Activated T-helper 1 cell treated with anti-CD3 and anti-CD28 coated beads, Interleukin-12 subunit alpha, Interleukin-12 subunit beta, Interleukin-2, Interleukin-4 antibody, amounts not matched to agents 30 ng/mL and 10 ng/mL and 1 ng/mL, durations not matched to agents 14 hours and 24 hours and 36 hours (primary cell): ENCODE measurements at regions of chr7 and their contacts with region 1.

Region 1: GRCh38 chr7:92447345-92448204 is at the start of gene GATAD1:
- DNase-seq: peak; percentile 79
- H3K4me3 Mint-ChIP-seq: peak within 1 kb of the TSS; percentile 89
- H3K27ac Mint-ChIP-seq: peak within 1 kb of the TSS; percentile 92
- H3K4me1 Mint-ChIP-seq: peaks cover 15% of the 10 kb centered on the region
- H3K27me3 Mint-ChIP-seq: no peaks in the 10 kb centered on the region
- total RNA-seq, gene GATAD1: 18.4 and 18.8 TPM in 2 replicates

Region 2: GRCh38 chr7:91089382-91089963 is 1358.1 kb before region 1 on chr7:
- intact Hi-C with region 1: loop called (anchors 10 kb)
- DNase-seq: no peak
- H3K4me3 Mint-ChIP-seq: no peak overlapping the region
- H3K27ac Mint-ChIP-seq: no peak overlapping the region
- H3K4me1 Mint-ChIP-seq: peaks cover 11% of the 10 kb centered on the region
- H3K27me3 Mint-ChIP-seq: peaks cover 9% of the 10 kb centered on the region

Region 3: DNA sequence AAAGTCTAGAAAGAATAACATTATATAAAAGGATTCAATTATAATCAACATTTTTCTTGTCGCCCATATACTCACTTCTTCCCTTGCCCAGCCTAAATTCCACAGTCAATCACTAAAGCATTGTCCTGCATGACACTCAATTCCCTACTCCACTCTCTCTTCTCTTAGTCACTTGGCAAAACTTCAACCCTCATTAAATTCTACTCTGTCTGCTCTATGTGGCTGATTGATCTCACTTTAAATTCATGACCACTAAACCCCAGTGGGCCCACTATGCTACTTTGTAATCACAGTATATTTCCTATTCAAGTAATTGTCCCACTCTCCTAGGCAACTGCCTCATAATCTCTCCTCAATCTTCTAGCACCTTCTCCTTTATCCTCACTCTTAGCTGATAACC is 621.2 kb before region 1 on chr7:
- intact Hi-C with region 1: loop called (anchors 1 kb)
- DNase-seq: no peak
- H3K4me3 Mint-ChIP-seq: no peak overlapping the region
- H3K27ac Mint-ChIP-seq: no peak overlapping the region
- H3K4me1 Mint-ChIP-seq: no peaks in the 10 kb centered on the region
- H3K27me3 Mint-ChIP-seq: peaks cover 1% of the 10 kb centered on the region

Region 4: GRCh38 chr7:91940572-91941341 is 506.8 kb before region 1 on chr7 and contains the start of gene AKAP9:
- intact Hi-C with region 1: loop called (anchors 1 kb)
- DNase-seq: peak; percentile 87
- H3K4me3 Mint-ChIP-seq: peak within 1 kb of the TSS; percentile 88
- H3K27ac Mint-ChIP-seq: peak within 1 kb of the TSS; percentile 97
- H3K4me1 Mint-ChIP-seq: peaks cover 30% of the 10 kb centered on the region
- H3K27me3 Mint-ChIP-seq: peaks cover 11% of the 10 kb centered on the region
- total RNA-seq, gene AKAP9: 34.1 and 36.1 TPM in 2 replicates

Region 5: GRCh38 chr7:92178927-92179924 is 268.3 kb before region 1 on chr7 and contains the start of gene LRRD1:
- intact Hi-C with region 1: loop called (anchors 1 kb)
- DNase-seq: peak; percentile 84
- H3K4me3 Mint-ChIP-seq: peak within 1 kb of the TSS; percentile 69
- H3K27ac Mint-ChIP-seq: no peak within 1 kb of the TSS
- H3K4me1 Mint-ChIP-seq: no peaks in the 10 kb centered on the region
- H3K27me3 Mint-ChIP-seq: peaks cover 15% of the 10 kb centered on the region
- total RNA-seq, gene LRRD1: not detected in 2 replicates

Region 6: GRCh38 chr7:92375013-92375412 is 72.6 kb before region 1 on chr7:
- intact Hi-C with region 1: no loop called
- DNase-seq: no peak
- H3K4me3 Mint-ChIP-seq: no peak overlapping the region
- H3K27ac Mint-ChIP-seq: no peak overlapping the region
- H3K4me1 Mint-ChIP-seq: no peaks in the 10 kb centered on the region
- H3K27me3 Mint-ChIP-seq: no peaks in the 10 kb centered on the region

Region 7: GRCh38 chr7:92421676-92422435 is 25.7 kb before region 1 on chr7:
- intact Hi-C with region 1: loop called (anchors 1 kb)
- DNase-seq: no peak
- H3K4me3 Mint-ChIP-seq: no peak overlapping the region
- H3K27ac Mint-ChIP-seq: no peak overlapping the region
- H3K4me1 Mint-ChIP-seq: peaks cover 13% of the 10 kb centered on the region
- H3K27me3 Mint-ChIP-seq: peaks cover 3% of the 10 kb centered on the region

Region 8: GRCh38 chr7:92528188-92528957 is 80.8 kb after region 1 on chr7 and contains the starts of genes PEX1 and RBM48:
- intact Hi-C with region 1: loop called (anchors 1 kb)
- DNase-seq: peak; percentile 94
- H3K4me3 Mint-ChIP-seq: peak within 1 kb of the TSS; percentile 91
- H3K27ac Mint-ChIP-seq: peak within 1 kb of the TSS; percentile 94
- H3K4me1 Mint-ChIP-seq: peaks cover 24% of the 10 kb centered on the region
- H3K27me3 Mint-ChIP-seq: no peaks in the 10 kb centered on the region
- total RNA-seq, gene PEX1: 14.7 and 17.0 TPM in 2 replicates
- total RNA-seq, gene RBM48: 17.2 and 17.6 TPM in 2 replicates